ENCODE measurements at regions of chr6 and their contacts with region 1.

Region 1: DNA sequence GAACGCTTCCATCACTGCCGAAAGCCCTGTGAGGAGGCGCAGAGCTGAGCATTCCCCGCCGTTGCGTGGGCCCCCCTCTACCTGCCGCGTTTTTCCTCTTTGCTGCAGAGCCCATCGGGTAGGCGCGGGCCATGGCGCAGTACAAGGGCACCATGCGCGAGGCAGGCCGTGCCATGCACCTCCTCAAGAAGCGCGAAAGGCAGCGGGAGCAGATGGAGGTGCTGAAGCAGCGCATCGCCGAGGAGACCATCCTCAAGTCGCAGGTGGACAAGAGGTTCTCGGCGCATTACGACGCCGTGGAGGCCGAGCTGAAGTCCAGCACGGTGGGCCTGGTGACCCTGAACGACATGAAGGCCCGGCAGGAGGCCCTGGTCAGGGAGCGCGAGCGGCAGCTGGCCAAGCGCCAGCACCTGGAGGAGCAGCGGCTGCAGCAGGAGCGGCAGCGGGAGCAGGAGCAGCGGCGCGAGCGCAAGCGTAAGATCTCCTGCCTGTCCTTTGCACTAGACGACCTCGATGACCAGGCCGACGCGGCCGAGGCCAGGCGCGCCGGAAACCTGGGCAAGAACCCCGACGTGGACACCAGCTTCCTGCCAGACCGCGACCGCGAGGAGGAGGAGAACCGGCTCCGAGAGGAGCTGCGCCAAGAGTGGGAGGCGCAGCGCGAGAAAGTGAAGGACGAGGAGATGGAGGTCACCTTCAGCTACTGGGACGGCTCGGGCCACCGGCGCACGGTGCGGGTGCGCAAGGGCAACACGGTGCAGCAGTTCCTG is 693 bp downstream of the FAM50B start:
- DNase-seq: peak in 5 of 6 donors; percentile 32 to 85 (median 67)
- ATAC-seq: peak; percentile 26 to 38 (median 37)
- H3K4me3 ChIP-seq: peak overlapping the region; percentile 33 to 54 (median 38)
- H3K27ac ChIP-seq: peak overlapping the region; percentile 56 to 71 (median 66)
- H3K4me1 ChIP-seq: peaks cover 0 to 2% (median 0%) of the 10 kb centered on the region in 3 donors
- H3K27me3 ChIP-seq: no peaks in the 10 kb centered on the region
- CTCF ChIP-seq: no peak

Region 2: GRCh38 chr6:3939964-3940363 is 90.1 kb after region 1 on chr6:
- intact Hi-C with region 1: loop called in 1 of 3 experiments (anchors 10 kb)
- DNase-seq: no peak
- ATAC-seq: no peak
- H3K4me3 ChIP-seq: no peak overlapping the region
- H3K27ac ChIP-seq: no peak overlapping the region
- H3K4me1 ChIP-seq: no peaks in the 10 kb centered on the region
- H3K27me3 ChIP-seq: no peaks in the 10 kb centered on the region
- CTCF ChIP-seq: no peak